ENCODE measurements at regions of chr19 and their contacts with region 1.

Region 1: DNA sequence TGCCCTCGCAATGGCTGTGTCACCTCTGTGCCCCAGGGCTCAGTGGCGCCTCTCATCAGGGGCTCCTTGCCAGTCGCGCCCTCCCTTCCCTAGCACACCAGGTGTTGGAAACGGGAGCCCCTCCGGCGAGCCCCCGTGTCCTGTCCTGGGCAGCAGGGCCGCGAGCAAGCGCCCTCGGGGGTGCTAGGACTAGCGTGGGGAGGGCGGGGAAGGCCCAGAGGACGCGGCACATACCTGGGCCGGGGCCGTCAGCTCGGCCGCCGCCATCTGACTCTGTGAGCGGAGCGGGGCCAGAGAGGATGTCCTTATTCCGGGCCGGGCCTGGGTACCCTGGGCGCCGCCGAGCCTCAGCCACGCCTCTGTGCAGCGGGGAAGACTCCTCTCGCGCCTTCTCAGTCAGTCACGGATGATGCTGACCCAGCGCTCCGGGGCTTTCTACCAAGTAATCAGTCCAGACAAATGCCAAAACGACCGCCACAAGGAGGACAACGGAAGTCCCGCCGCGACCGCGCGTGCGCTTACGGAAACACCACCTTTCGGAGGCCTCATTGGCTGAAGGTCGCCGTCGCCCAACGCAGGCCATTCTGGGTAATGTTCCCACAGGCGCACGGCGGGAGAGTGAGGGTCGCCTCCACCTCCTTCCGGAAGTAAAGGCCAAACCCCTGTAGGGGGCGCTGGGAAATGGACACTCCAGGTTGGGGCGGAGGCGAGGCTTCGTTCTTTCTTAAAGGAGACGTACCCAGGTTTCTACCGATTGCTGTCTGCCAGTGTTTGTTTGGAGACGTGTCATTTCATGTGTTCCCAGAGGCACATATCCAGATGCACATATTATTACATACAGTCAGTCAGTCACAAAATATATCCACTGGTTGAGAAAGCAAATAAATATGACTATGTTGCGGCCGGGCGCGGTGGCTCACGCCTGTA is at the start of gene ZNF256:
- DNase-seq: peak; percentile 80 to 90
- ATAC-seq: peak; percentile 90 to 91 (median 91)
- H3K4me3 ChIP-seq: peak within 1 kb of the TSS; percentile 75
- H3K4me3 Mint-ChIP-seq: peak within 1 kb of the TSS; percentile 94
- H3K27ac ChIP-seq: peak within 1 kb of the TSS; percentile 90
- H3K27ac Mint-ChIP-seq: peak within 1 kb of the TSS; percentile 92 to 93
- H3K4me1 ChIP-seq: peaks cover 15% of the 10 kb centered on the region
- H3K4me1 Mint-ChIP-seq: peaks cover 20 to 40% of the 10 kb centered on the region in 2 donors
- H3K27me3 ChIP-seq: no peaks in the 10 kb centered on the region
- H3K27me3 Mint-ChIP-seq: no peaks in the 10 kb centered on the region
- CTCF ChIP-seq: peak; percentile 53
- total RNA-seq, gene ZNF256: 17.7 to 31.2 (median 27.2) TPM

Region 2: GRCh38 chr19:57888560-57889231 is 58.8 kb before region 1 on chr19 and contains the start of gene ZNF814:
- intact Hi-C with region 1: no loop called
- DNase-seq: peak; percentile 82 to 84
- ATAC-seq: peak; percentile 93 to 97 (median 94)
- H3K4me3 ChIP-seq: peak within 1 kb of the TSS; percentile 84
- H3K4me3 Mint-ChIP-seq: peak within 1 kb of the TSS; percentile 95
- H3K27ac ChIP-seq: peak within 1 kb of the TSS; percentile 75
- H3K27ac Mint-ChIP-seq: peak within 1 kb of the TSS; percentile 89 to 91
- H3K4me1 ChIP-seq: peaks cover 21% of the 10 kb centered on the region
- H3K4me1 Mint-ChIP-seq: peaks cover 22 to 28% of the 10 kb centered on the region in 2 donors
- H3K27me3 ChIP-seq: no peaks in the 10 kb centered on the region
- H3K27me3 Mint-ChIP-seq: no peaks in the 10 kb centered on the region
- CTCF ChIP-seq: no peak
- total RNA-seq, gene ZNF814: 25.2 to 51.2 (median 38.3) TPM

Region 3: DNA sequence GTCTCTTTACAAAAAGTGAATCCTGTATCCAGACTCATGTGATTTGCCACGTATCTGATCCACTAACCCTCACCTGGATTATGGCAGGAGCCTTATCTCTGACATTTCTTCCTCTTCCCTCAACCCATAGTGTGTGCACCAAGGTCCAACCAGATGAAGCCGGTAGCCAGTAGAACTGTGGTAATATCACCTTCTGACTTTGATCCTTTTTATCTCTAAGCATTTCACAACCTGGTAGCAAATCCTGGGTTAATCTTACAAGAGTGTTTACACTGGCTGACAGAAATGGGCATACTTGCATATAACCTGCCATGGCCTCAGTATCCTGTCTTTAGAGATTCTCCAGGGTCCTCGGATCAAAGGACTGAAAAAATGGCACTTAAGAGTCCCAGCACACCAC is 32.9 kb before region 1 on chr19:
- intact Hi-C with region 1: loop called (anchors 1 kb)
- DNase-seq: no peak
- ATAC-seq: no peak
- H3K4me3 ChIP-seq: no peak overlapping the region
- H3K4me3 Mint-ChIP-seq: peak overlapping the region; percentile 97
- H3K27ac ChIP-seq: no peak overlapping the region
- H3K27ac Mint-ChIP-seq: peak overlapping the region; percentile 99
- H3K4me1 ChIP-seq: peaks cover 16% of the 10 kb centered on the region
- H3K4me1 Mint-ChIP-seq: peaks cover 41 to 47% of the 10 kb centered on the region in 2 donors
- H3K27me3 ChIP-seq: no peaks in the 10 kb centered on the region
- H3K27me3 Mint-ChIP-seq: no peaks in the 10 kb centered on the region
- CTCF ChIP-seq: no peak